Activated naive CD8-positive, alpha-beta T cell treated with anti-CD3 and anti-CD28 coated beads, Interleukin-2, amount 10 ng/mL, durations not matched to agents 7 days and 5 days (primary cell): ENCODE measurements at regions of chr2 and their contacts with region 1.

Region 1: GRCh38 chr2:230974096-230974913 is 21.6 kb upstream of the SPATA3 start:
- DNase-seq: peak; percentile 68
- ATAC-seq: peak; percentile 98
- H3K4me3 Mint-ChIP-seq: peak overlapping the region; percentile 64
- H3K27ac Mint-ChIP-seq: peak overlapping the region; percentile 82
- H3K4me1 Mint-ChIP-seq: peaks cover 54% of the 10 kb centered on the region
- H3K27me3 Mint-ChIP-seq: no peaks in the 10 kb centered on the region

Region 2: GRCh38 chr2:230985519-230986231 is 11.4 kb after region 1 on chr2:
- POLR2A ChIA-PET with region 1: interaction called, 14 read pairs
- DNase-seq: no peak
- ATAC-seq: no peak
- H3K4me3 Mint-ChIP-seq: no peak overlapping the region
- H3K27ac Mint-ChIP-seq: peak overlapping the region; percentile 62
- H3K4me1 Mint-ChIP-seq: peaks cover 47% of the 10 kb centered on the region
- H3K27me3 Mint-ChIP-seq: peaks cover 5% of the 10 kb centered on the region

Region 3: DNA sequence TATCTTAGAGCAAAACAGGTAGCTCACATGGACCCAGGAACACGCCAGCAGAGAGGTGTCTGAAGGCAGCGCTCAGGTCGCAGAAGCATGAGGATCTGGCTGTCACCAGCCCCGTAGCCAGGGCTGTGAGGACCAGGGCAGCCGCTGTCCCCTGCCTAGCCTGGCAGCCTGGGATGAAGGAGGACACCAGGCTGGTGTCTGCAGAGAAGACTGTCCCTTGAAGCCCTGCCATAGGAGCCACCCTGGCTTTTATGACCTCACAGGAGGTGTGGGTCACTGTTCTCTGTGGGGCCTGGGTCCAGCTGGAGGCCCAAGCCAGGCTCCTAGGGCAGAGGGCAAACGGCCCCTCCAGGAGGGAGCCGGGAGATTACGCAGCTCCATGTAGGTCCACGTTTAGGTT is 21.5 kb after region 1 on chr2 and contains the start of gene SPATA3:
- POLR2A ChIA-PET with region 1: no interaction called
- DNase-seq: no peak
- ATAC-seq: no peak
- H3K4me3 Mint-ChIP-seq: no peak within 1 kb of the TSS
- H3K27ac Mint-ChIP-seq: no peak within 1 kb of the TSS
- H3K4me1 Mint-ChIP-seq: no peaks in the 10 kb centered on the region
- H3K27me3 Mint-ChIP-seq: peaks cover 46% of the 10 kb centered on the region
- total RNA-seq, gene SPATA3: not detected

Region 4: DNA sequence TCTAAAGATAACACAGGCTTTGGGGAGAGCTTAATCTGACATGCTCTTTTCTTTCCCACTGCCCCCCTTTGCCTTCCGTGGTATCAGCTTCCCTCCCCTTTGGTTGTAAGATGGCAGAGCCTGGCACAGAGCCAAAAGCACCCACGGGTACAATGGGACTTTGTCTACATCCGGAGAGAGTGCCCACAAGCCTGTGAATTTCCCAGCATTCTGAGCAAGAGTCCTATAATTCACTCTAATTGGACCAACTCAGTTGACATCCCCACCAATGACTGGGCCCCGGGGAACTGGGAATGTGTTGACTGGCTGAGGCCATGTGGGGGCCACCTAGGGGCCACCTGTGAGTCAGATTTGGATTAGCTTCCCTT is 42.9 kb after region 1 on chr2:
- POLR2A ChIA-PET with region 1: no interaction called
- DNase-seq: no peak
- ATAC-seq: no peak
- H3K4me3 Mint-ChIP-seq: no peak overlapping the region
- H3K27ac Mint-ChIP-seq: no peak overlapping the region
- H3K4me1 Mint-ChIP-seq: no peaks in the 10 kb centered on the region
- H3K27me3 Mint-ChIP-seq: peaks cover 33% of the 10 kb centered on the region

Region 5: DNA sequence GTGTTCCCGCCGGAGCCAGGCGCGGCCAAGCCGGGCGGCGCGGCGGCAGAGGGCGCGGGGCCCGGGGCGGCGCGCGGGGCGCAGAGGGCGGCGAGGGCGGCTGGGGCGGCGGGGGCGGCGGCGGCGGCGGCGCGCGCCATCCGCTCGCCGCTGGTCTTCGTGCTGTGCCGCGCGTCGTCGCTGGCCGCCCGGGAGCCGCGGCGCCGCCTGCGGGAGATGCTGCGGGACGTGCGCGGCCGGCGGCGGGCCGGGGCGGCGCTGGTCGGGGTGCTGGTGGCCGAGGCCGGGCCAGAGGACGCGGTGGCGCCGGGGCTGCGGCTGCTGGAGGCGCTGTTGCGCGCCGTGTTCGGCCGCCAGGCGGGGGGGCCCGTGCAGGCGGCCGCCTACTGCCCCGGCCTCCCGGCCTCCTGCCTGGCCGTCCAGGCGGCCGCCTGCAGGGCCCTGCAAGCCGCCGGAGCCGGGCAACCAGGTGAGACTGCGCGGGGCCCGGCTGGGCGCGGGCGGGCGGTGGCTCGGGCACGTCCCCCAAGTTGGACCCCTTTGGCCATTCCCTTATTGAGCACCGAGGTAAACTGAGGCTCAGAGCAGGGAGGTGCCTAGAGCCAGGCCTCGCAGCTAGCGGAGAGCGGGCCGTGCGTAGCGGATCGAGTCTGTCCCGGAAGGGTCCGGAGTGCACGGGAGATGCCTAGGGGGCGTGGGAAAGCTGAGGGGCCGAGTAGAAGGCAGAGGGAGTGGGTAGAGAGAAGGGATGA is 63.6 kb after region 1 on chr2:
- POLR2A ChIA-PET with region 1: no interaction called
- DNase-seq: peak; percentile 40
- ATAC-seq: no peak
- H3K4me3 Mint-ChIP-seq: peak overlapping the region; percentile 66
- H3K27ac Mint-ChIP-seq: no peak overlapping the region
- H3K4me1 Mint-ChIP-seq: no peaks in the 10 kb centered on the region
- H3K27me3 Mint-ChIP-seq: peaks cover 74% of the 10 kb centered on the region